Mammary epithelial cell (primary cell): ENCODE measurements at regions of chr2 and their contacts with region 1.

Region 1: DNA sequence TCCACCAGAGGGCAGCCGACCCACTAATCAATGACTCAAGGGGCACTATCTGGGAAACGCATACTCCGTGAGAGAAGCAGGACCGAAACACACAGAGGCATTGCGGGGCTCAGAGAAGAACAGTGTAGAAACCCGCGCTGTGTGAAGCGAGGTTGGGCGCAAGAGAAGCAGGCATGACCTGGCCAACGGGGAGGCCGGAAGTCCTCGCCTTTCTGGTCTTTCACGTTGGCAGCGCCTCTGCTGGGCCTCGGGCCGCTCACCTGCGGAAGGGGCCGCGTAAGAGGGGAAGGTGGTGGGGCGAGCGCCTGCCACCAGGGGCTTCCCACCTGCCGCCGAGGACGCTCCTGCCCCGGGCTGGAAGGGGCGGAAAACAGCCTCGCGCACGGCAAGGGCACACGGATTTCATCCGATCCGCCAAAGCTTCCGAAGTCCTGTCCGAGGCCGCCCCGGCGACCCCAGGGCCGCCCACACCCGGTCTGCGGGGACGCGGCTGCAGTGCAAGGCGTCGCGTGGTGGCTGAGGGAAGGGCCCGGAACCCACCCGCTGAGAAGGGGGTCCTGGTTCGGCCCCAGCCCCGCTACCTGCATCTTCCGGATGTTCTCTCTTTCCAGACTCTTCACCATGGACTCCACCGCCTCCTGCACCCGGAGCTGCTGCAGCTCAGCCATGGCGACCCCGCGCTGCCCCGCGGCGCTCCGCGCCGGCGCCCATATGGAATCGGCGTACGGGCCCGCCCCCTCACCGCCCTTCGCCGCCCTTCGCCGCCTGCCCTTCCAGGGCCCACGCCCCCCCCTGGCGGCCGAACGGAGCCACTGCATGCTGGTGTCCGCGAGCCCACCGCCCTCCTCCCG is at the start of gene FAM136A:
- DNase-seq: peak; percentile 65
- H3K4me3 ChIP-seq: peak within 1 kb of the TSS; percentile 72 to 87 (median 83)
- H3K27ac ChIP-seq: peak within 1 kb of the TSS; percentile 58
- H3K4me1 ChIP-seq: peaks cover 9% of the 10 kb centered on the region
- H3K27me3 ChIP-seq: no peaks in the 10 kb centered on the region
- CTCF ChIP-seq: peak; percentile 64 to 86
- total RNA-seq, gene FAM136A: 14.5 to 37.8 TPM

Region 2: DNA sequence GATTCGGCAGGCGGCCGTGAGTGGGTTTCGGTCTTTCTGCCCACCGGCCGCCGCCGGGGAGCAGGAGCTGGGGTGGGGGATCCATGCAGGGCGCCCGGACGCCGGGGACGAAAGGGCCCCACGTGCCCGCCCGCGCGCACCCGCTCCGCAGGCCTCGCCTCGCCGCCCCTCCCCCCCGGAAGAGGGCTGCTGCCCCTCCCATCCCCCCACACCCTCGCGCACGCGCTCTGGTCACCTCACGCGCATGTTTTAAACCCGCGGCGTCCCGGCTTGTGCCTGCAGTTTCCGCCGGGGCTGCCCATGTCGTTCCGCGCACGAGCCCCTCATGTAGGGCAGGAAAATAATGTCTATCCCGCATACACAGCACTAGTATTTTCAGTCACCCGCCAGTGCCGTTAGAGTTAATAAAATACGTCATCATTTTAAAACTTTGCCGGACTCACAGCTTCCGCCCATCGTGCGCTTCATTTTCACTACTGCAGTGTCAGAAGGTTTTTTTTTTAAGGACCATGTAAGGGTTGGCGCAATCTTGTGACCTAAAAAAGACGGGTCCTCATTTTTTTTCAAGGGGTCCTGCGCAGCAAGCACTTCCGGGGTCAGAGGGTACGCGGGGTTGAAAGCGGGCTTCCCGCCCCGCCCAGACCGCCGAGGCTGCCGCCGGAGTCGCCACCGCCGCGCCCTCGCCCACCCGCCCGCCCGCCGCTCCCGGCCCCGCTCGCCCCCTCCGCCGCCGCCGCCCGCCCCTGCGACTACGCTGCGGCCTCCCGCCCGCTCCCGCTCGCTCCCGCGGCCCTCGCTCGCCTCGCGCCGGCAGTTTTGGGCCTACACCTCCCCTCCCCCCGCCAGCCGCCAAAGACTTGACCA is 214.5 kb before region 1 on chr2 and contains the start of gene PCBP1:
- CTCF ChIA-PET with region 1: no interaction called
- dilution Hi-C with region 1: no loop called
- in situ Hi-C with region 1: no loop called
- intact Hi-C with region 1: loop called (anchors 10 kb)
- DNase-seq: peak; percentile 86
- H3K4me3 ChIP-seq: peak within 1 kb of the TSS; percentile 85 to 96 (median 86)
- H3K27ac ChIP-seq: peak within 1 kb of the TSS; percentile 99
- H3K4me1 ChIP-seq: peaks cover 36% of the 10 kb centered on the region
- H3K27me3 ChIP-seq: no peaks in the 10 kb centered on the region
- CTCF ChIP-seq: no peak
- total RNA-seq, gene PCBP1: 47.2 to 258 TPM

Region 3: DNA sequence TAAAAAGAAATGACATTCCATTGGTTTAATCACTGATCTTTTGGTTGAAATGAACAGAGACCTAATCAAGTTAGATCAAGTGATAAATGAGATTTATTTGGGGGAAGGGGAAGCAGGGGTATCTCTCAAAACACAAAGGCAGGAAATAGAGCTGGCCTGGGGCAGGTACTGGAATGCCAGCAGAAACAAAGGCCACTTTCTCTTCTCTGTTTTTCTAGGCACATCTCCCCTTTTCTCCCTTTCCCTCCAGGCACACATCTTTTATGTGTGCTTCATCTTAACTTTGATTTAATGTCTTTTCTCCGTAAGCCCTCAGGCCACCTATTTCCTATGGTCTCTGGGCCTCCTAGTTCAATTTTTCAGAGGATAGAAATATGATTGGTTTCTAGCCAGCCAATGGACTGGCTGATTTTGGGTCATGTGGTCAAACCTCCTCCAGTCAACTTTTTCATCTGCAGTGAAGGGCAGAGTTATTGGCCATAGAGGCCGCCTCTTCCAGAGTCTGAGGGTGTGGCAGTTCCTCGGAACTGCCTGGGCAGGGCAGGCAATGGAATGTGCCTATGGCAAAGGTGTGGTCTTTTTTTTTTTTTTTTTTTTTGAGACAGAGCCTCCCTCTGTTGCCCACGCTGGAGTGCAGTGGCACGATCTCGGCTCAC is 59.2 kb after region 1 on chr2:
- CTCF ChIA-PET with region 1: no interaction called
- dilution Hi-C with region 1: loop called (anchors 5 kb)
- in situ Hi-C with region 1: no loop called
- intact Hi-C with region 1: no loop called
- DNase-seq: peak; percentile 48
- H3K4me3 ChIP-seq: no peak overlapping the region
- H3K27ac ChIP-seq: peak overlapping the region; percentile 14
- H3K4me1 ChIP-seq: peaks cover 15% of the 10 kb centered on the region
- H3K27me3 ChIP-seq: no peaks in the 10 kb centered on the region
- CTCF ChIP-seq: no peak

Region 4: DNA sequence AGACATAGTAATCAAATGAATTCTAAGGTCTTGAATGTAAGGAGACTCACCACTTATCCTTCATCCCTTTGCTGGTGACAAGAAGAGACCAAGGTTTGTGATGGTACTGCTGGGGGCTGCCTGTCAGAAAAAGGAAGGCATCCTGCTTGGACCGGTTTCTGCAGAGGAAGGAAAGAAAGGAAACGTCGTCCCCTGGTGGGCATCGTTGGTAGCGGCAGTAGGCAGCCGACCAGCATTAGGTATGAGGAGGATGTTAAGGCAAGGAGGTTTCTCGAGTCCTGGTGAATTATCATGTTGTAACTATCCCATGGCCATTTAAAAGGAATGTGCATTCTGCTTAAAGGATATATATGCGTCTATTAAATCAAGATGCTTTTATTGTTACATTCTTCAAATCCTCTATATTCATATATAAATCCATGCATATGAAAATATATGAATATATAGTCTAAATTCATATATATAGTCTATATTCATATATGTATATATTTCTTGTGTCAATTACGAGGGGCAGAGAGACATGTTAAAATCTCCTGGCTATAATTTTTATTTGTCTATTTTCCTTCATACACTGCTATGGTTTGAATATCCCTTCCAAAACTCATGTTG is 346.4 kb after region 1 on chr2:
- CTCF ChIA-PET with region 1: no interaction called
- dilution Hi-C with region 1: loop called (anchors 25 kb)
- in situ Hi-C with region 1: loop called (anchors 5 to 10 kb)
- intact Hi-C with region 1: loop called (anchors 1 kb)
- DNase-seq: peak; percentile 51
- H3K4me3 ChIP-seq: no peak overlapping the region
- H3K27ac ChIP-seq: no peak overlapping the region
- H3K4me1 ChIP-seq: no peaks in the 10 kb centered on the region
- H3K27me3 ChIP-seq: no peaks in the 10 kb centered on the region
- CTCF ChIP-seq: peak; percentile 100

Region 5: GRCh38 chr2:70861777-70862625 is 560.4 kb after region 1 on chr2:
- CTCF ChIA-PET with region 1: no interaction called
- dilution Hi-C with region 1: no loop called
- in situ Hi-C with region 1: no loop called
- intact Hi-C with region 1: loop called (anchors 5 kb)
- DNase-seq: peak; percentile 54
- H3K4me3 ChIP-seq: no peak overlapping the region
- H3K27ac ChIP-seq: no peak overlapping the region
- H3K4me1 ChIP-seq: no peaks in the 10 kb centered on the region
- H3K27me3 ChIP-seq: peaks cover 8% of the 10 kb centered on the region
- CTCF ChIP-seq: peak; percentile 95 to 98

Region 6: GRCh38 chr2:71130113-71130904 is 828.7 kb after region 1 on chr2 and contains the starts of genes MCEE and MPHOSPH10:
- CTCF ChIA-PET with region 1: no interaction called
- dilution Hi-C with region 1: no loop called
- in situ Hi-C with region 1: no loop called
- intact Hi-C with region 1: loop called (anchors 10 kb)
- DNase-seq: peak; percentile 92
- H3K4me3 ChIP-seq: peak within 1 kb of the TSS; percentile 91 to 98 (median 91)
- H3K27ac ChIP-seq: peak within 1 kb of the TSS; percentile 71
- H3K4me1 ChIP-seq: peaks cover 4% of the 10 kb centered on the region
- H3K27me3 ChIP-seq: no peaks in the 10 kb centered on the region
- CTCF ChIP-seq: no peak
- total RNA-seq, gene MCEE: 7.0 to 9.3 TPM
- total RNA-seq, gene MPHOSPH10: 10.5 to 28.1 TPM